ENCODE measurements at regions of chr20 and their contacts with region 1.

Region 1: GRCh38 chr20:10857352-10858070 is 183.7 kb upstream of the JAG1 start:
- DNase-seq: peak; percentile 76

Region 2: DNA sequence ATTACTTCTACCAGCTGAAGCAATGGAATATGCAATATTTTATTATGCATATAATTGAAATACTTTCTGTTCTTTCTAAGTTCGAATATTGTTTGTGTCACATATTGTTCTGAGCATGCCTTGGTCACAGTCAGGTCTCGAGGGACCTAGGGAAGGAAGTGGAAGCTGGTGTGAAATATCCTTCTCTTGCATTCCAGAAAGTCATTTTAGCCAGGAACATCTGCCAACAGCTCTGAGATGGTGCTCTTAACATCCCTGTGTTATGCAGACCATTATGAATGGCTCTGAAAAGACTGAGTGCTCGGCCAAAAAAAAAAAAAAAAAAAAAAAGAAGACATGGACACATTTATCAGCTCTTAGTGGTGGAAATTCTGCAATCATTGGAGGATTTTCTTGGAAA is 51.0 kb before region 1 on chr20:
- intact Hi-C with region 1: loop called (anchors 2 kb)
- DNase-seq: no peak

Region 3: DNA sequence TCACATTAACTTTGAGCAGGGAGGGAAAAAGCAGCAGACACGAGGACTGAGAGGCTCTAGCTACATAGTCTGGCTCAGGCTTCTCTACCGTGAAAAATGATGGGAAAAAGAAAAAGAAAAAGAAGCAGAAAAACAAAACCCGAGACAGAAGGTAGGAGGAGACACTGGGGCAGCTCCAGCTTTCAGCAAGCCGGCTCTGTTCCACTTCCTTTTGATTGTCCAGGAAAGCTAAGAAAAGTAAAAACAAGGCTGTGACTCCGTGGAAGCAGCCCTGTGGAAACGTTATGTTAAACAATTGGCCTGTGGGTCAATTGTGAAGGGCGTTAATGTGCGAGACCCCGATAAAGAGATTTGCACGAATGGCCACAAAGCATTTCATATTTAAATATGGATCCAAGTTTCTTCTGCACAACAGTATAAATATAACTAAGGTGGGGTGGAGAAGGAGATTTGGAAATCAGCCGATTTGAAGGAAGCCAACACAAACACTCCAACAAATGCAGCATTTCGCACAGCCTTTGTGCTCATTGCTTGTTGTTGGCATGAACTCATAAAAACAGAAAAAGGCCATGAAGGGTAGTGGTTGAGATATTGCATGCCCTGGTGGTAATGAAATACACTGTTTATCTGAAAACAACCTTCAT is 53.1 kb after region 1 on chr20:
- intact Hi-C with region 1: loop called (anchors 2 kb)
- DNase-seq: no peak

Region 4: GRCh38 chr20:10970109-10970508 is 112.6 kb after region 1 on chr20:
- intact Hi-C with region 1: no loop called
- DNase-seq: no peak

Measured in cardiac septum (tissue), 1 donor.